ENCODE measurements at regions of chr2 and their contacts with region 1.

Region 1: GRCh38 chr2:6909431-6910385 is 7.5 kb upstream of the RNF144A start:
- DNase-seq: peak; percentile 62
- ATAC-seq: peak; percentile 34
- H3K4me3 Mint-ChIP-seq: peak overlapping the region; percentile 75
- H3K27ac Mint-ChIP-seq: peak overlapping the region; percentile 99
- H3K4me1 Mint-ChIP-seq: peaks cover 90% of the 10 kb centered on the region
- H3K27me3 Mint-ChIP-seq: no peaks in the 10 kb centered on the region

Region 2: GRCh38 chr2:5539282-5540165 is 1370.2 kb before region 1 on chr2:
- CTCF ChIA-PET with region 1: no interaction called
- POLR2A ChIA-PET with region 1: no interaction called
- intact Hi-C with region 1: no loop called
- DNase-seq: no peak
- ATAC-seq: no peak
- H3K4me3 Mint-ChIP-seq: no peak overlapping the region
- H3K27ac Mint-ChIP-seq: no peak overlapping the region
- H3K4me1 Mint-ChIP-seq: no peaks in the 10 kb centered on the region
- H3K27me3 Mint-ChIP-seq: no peaks in the 10 kb centered on the region

Region 3: GRCh38 chr2:5657231-5657630 is 1252.5 kb before region 1 on chr2:
- CTCF ChIA-PET with region 1: no interaction called
- POLR2A ChIA-PET with region 1: no interaction called
- intact Hi-C with region 1: no loop called
- DNase-seq: no peak
- ATAC-seq: no peak
- H3K4me3 Mint-ChIP-seq: no peak overlapping the region
- H3K27ac Mint-ChIP-seq: no peak overlapping the region
- H3K4me1 Mint-ChIP-seq: no peaks in the 10 kb centered on the region
- H3K27me3 Mint-ChIP-seq: peaks cover 2% of the 10 kb centered on the region

Region 4: GRCh38 chr2:6791679-6792078 is 118.0 kb before region 1 on chr2:
- CTCF ChIA-PET with region 1: no interaction called
- POLR2A ChIA-PET with region 1: no interaction called
- intact Hi-C with region 1: no loop called
- DNase-seq: no peak
- ATAC-seq: no peak
- H3K4me3 Mint-ChIP-seq: no peak overlapping the region
- H3K27ac Mint-ChIP-seq: no peak overlapping the region
- H3K4me1 Mint-ChIP-seq: no peaks in the 10 kb centered on the region
- H3K27me3 Mint-ChIP-seq: peaks cover 2% of the 10 kb centered on the region

Region 5: DNA sequence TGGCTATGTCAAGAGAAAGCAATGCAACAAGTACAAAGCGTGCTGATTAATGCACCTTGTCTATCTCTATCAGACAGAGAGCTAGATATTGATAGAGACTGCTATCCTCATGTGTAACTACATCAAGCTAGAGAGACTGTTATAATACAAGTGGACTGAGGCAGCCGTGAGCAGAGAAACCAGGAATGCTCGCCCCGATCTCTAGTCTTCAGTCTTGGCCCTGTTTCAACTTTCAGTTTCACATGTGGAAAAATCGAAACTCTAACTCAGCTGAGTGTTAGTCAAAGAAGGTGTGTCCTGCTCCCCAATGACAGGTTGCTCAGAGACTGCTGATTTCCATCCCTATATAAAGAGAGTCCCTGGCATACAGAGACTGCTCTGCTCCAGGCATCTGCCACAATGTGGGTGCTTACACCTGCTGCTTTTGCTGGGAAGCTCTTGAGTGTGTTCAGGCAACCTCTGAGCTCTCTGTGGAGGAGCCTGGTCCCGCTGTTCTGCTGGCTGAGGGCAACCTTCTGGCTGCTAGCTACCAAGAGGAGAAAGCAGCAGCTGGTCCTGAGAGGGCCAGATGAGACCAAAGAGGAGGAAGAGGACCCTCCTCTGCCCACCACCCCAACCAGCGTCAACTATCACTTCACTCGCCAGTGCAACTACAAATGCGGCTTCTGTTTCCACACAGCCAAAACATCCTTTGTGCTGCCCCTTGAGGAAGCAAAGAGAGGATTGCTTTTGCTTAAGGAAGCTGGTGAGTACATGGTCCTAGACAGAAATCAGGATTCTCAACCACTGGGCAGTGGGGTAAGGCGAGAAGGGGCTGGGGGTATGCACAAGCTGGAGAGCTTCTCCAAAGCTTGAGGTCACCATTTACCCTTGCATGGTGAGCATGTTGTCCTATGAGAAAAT is 32.1 kb before region 1 on chr2 and contains the start of gene RSAD2:
- CTCF ChIA-PET with region 1: interaction called, 6 read pairs
- POLR2A ChIA-PET with region 1: interaction called, 6 read pairs
- intact Hi-C with region 1: loop called (anchors 2 kb)
- DNase-seq: peak; percentile 52
- ATAC-seq: peak; percentile 86
- H3K4me3 Mint-ChIP-seq: peak within 1 kb of the TSS; percentile 68
- H3K27ac Mint-ChIP-seq: peak within 1 kb of the TSS; percentile 38
- H3K4me1 Mint-ChIP-seq: peaks cover 77% of the 10 kb centered on the region
- H3K27me3 Mint-ChIP-seq: no peaks in the 10 kb centered on the region
- total RNA-seq, gene RSAD2: 8.1 to 10.2 TPM

Region 6: GRCh38 chr2:6945087-6945813 is 35.5 kb after region 1 on chr2:
- CTCF ChIA-PET with region 1: interaction called, 8 read pairs
- POLR2A ChIA-PET with region 1: no interaction called
- intact Hi-C with region 1: loop called in 1 of 2 experiments (anchors 5 kb)
- DNase-seq: no peak
- ATAC-seq: peak; percentile 31
- H3K4me3 Mint-ChIP-seq: no peak overlapping the region
- H3K27ac Mint-ChIP-seq: peak overlapping the region; percentile 72
- H3K4me1 Mint-ChIP-seq: peaks cover 50% of the 10 kb centered on the region
- H3K27me3 Mint-ChIP-seq: no peaks in the 10 kb centered on the region

Region 7: GRCh38 chr2:7014174-7014640 is 104.5 kb after region 1 on chr2:
- CTCF ChIA-PET with region 1: interaction called, 4 read pairs
- POLR2A ChIA-PET with region 1: interaction called, 4 read pairs
- intact Hi-C with region 1: loop called (anchors 5 kb)
- DNase-seq: peak; percentile 43
- ATAC-seq: peak; percentile 39
- H3K4me3 Mint-ChIP-seq: no peak overlapping the region
- H3K27ac Mint-ChIP-seq: peak overlapping the region; percentile 27
- H3K4me1 Mint-ChIP-seq: peaks cover 40% of the 10 kb centered on the region
- H3K27me3 Mint-ChIP-seq: no peaks in the 10 kb centered on the region